Left colon (tissue), 2 donors: ENCODE measurements at regions of chr7 and their contacts with region 1.

Region 1: GRCh38 chr7:45923290-45923689 is 2.2 kb upstream of the IGFBP3 start:
- DNase-seq: peak in 1 of 2 donors; percentile 81
- ATAC-seq: peak; percentile 45

Region 2: GRCh38 chr7:46178661-46179060 is 255.4 kb after region 1 on chr7:
- intact Hi-C with region 1: no loop called
- DNase-seq: no peak
- ATAC-seq: no peak

Region 3: GRCh38 chr7:46349490-46349889 is 426.2 kb after region 1 on chr7:
- intact Hi-C with region 1: loop called in 1 of 2 experiments (anchors 10 kb)
- DNase-seq: no peak
- ATAC-seq: no peak

Region 4: GRCh38 chr7:47088329-47089067 is 1165.2 kb after region 1 on chr7:
- intact Hi-C with region 1: loop called (anchors 5 to 10 kb)
- DNase-seq: peak in 1 of 2 donors; percentile 45
- ATAC-seq: peak; percentile 59

Region 5: GRCh38 chr7:47179812-47180515 is 1256.7 kb after region 1 on chr7:
- intact Hi-C with region 1: loop called in 1 of 2 experiments (anchors 5 kb)
- DNase-seq: peak in 1 of 2 donors; percentile 52
- ATAC-seq: peak; percentile 73